Transverse colon (tissue), 4 donors: ENCODE measurements at regions of chr13 and their contacts with region 1.

Region 1: GRCh38 chr13:30132623-30133553 is 174.5 kb downstream of the KATNAL1 start:
- DNase-seq: peak; percentile 99
- H3K4me3 ChIP-seq: peak overlapping the region in 1 of 4 donors; percentile 1
- H3K27ac ChIP-seq: peak overlapping the region; percentile 19 to 76 (median 46)
- H3K4me1 ChIP-seq: peaks cover 7 to 16% (median 13%) of the 10 kb centered on the region in 4 donors
- H3K27me3 ChIP-seq: no peaks in the 10 kb centered on the region
- CTCF ChIP-seq: peak; percentile 88 to 96 (median 94)
- EP300 ChIP-seq: no peak
- POLR2A ChIP-seq: no peak

Region 2: GRCh38 chr13:30306762-30307193 is 173.9 kb after region 1 on chr13:
- in situ Hi-C with region 1: loop called in 1 of 4 experiments (anchors 25 kb)
- intact Hi-C with region 1: no loop called
- DNase-seq: peak; percentile 95
- H3K4me3 ChIP-seq: peak overlapping the region; percentile 90 to 100 (median 95)
- H3K27ac ChIP-seq: peak overlapping the region; percentile 92 to 94 (median 94)
- H3K4me1 ChIP-seq: peaks cover 0 to 30% (median 8%) of the 10 kb centered on the region in 4 donors
- H3K27me3 ChIP-seq: no peaks in the 10 kb centered on the region
- CTCF ChIP-seq: no peak
- EP300 ChIP-seq: no peak
- POLR2A ChIP-seq: no peak

Region 3: DNA sequence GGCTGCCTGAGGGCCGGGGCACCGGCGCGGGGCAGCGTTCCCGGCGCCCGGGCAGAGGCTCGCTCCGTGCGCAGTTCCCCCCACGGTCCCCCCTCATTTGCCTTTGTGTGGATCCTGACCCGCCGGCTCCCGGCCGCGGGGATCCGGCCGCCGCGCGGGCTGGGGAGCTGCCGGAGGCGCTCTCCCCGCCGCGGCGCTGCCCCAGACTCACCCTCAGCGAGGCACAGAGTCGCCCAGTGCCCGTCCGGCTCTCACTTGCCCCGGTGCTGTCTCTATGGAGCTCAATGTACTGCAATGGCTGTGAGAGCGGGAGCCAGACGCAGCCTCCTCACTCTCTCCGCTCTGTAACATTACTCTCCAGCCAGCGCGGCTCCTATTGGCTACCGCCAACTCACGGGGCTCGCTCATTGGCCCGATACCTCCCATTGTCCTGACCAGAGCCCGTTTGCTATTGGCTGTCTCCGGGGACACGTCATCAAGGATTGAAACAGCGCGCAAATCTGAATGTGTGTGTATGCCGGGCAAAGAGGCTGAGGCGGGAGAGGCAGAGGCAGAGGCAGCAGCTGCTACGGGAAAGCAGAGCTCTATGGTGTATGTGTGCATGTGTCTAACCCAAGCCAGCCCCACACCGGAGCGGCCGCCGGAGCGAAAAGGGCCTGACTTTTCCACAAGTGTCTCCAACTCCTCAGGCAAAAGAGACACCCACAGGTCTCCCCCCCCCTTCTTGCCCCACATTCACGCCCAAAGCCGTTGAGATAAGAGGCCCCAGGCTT is 332.9 kb after region 1 on chr13 and contains the start of gene HMGB1:
- in situ Hi-C with region 1: loop called in 3 of 4 experiments (anchors 25 kb)
- intact Hi-C with region 1: loop called (anchors 10 kb)
- DNase-seq: peak; percentile 98
- H3K4me3 ChIP-seq: peak within 1 kb of the TSS; percentile 80 to 100 (median 96)
- H3K27ac ChIP-seq: peak within 1 kb of the TSS; percentile 99 to 100 (median 100)
- H3K4me1 ChIP-seq: peaks cover 4 to 32% (median 23%) of the 10 kb centered on the region in 4 donors
- H3K27me3 ChIP-seq: no peaks in the 10 kb centered on the region
- CTCF ChIP-seq: no peak
- EP300 ChIP-seq: no peak
- POLR2A ChIP-seq: peak; percentile 99
- total RNA-seq, gene HMGB1: 131 to 274 (median 152) TPM

Region 4: GRCh38 chr13:30617315-30618185 is 484.7 kb after region 1 on chr13 and contains the start of gene USPL1:
- in situ Hi-C with region 1: loop called in 1 of 4 experiments (anchors 25 kb)
- intact Hi-C with region 1: no loop called
- DNase-seq: peak; percentile 99
- H3K4me3 ChIP-seq: peak within 1 kb of the TSS; percentile 82 to 93 (median 92)
- H3K27ac ChIP-seq: peak within 1 kb of the TSS; percentile 98 to 100 (median 100)
- H3K4me1 ChIP-seq: peaks cover 21 to 36% (median 29%) of the 10 kb centered on the region in 4 donors
- H3K27me3 ChIP-seq: no peaks in the 10 kb centered on the region
- CTCF ChIP-seq: peak in 4 of 5 experiments; percentile 29 to 93 (median 58)
- EP300 ChIP-seq: peak; percentile 56
- POLR2A ChIP-seq: peak; percentile 99
- total RNA-seq, gene USPL1: 8.6 to 27.3 (median 16.9) TPM

Region 5: DNA sequence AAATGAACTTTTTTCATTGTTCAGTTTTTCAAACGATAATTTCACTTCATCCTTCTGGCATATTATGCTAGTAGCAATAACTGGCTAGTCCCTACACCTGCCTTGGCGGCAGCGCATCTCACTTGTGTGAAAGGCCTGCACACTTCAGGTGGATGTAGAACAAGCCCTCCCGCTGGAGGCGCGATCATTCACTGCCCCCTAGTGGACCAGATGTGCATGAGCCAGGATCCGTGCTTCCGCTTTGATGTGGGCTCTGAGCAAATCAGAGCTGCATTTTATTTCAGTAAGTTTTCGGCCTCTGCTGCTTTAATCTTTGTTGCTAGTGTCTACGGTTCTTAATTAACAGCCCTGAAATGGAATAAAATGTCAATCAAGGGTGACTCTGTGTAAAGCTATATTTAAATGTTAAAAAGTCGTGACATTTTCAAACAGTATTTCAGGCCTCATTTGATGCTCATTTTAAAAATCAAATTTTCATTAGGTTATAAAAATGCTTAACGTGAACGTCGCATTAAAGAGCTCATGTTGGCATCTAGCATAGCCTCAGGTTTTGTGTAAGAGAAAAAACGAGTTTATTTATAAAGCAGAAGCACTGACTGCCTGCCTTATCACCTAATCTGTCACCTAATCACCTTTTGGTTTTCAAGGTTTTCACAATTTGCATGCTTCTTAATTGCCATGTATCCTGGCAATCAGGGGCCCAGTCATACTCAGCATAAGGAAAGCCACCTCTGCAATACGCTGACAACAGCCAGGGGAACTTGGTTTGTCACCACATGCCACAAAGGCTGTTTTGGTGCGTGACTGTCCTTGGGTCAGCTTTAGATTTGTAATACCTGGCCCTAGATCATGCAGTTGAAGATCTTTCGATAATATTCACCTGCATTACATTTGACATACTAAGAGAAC is 911.7 kb after region 1 on chr13:
- in situ Hi-C with region 1: loop called in 2 of 4 experiments (anchors 25 kb)
- intact Hi-C with region 1: no loop called
- DNase-seq: peak; percentile 87
- H3K4me3 ChIP-seq: no peak overlapping the region
- H3K27ac ChIP-seq: peak overlapping the region; percentile 80 to 84 (median 80)
- H3K4me1 ChIP-seq: peaks cover 12 to 36% (median 30%) of the 10 kb centered on the region in 4 donors
- H3K27me3 ChIP-seq: no peaks in the 10 kb centered on the region
- CTCF ChIP-seq: peak; percentile 93 to 97 (median 95)
- EP300 ChIP-seq: no peak
- POLR2A ChIP-seq: no peak